ENCODE measurements at regions of chr7 and their contacts with region 1.

Region 1: GRCh38 chr7:48109848-48110663 is 21.0 kb downstream of the UPP1 start:
- DNase-seq: peak; percentile 85
- ATAC-seq: peak; percentile 89

Region 2: GRCh38 chr7:47202146-47202783 is 907.8 kb before region 1 on chr7:
- intact Hi-C with region 1: no loop called
- DNase-seq: no peak
- ATAC-seq: no peak

Region 3: DNA sequence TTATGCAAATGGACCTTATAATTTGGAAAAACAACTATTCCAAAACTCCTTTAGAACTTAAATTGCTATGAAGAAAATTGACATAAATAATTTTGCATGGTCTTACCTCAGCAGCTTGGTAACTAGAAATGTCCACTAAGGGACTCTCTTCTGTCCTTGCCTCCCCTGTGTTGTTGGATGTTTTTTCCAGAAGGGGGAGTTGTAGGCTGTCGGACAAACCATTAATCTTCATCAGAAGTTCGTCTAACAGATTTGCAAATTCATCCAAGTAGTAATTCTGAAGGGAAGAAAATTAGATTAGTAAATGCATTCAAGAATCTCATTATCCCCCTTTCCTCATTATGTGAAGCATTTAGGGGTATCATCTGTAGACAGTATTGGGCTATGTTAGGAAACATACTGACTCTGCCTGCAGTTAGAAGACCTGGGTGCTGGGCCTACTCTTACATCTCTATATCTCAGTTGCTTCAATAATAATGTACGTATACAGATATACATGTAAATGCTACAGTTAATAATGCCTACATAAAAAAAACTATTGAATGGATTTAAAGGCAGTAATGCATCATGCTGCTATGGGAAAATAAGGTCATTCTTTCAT is 317.4 kb before region 1 on chr7:
- intact Hi-C with region 1: loop called (anchors 10 kb)
- DNase-seq: no peak
- ATAC-seq: peak; percentile 66

Region 4: GRCh38 chr7:47945261-47946001 is 164.6 kb before region 1 on chr7:
- intact Hi-C with region 1: loop called (anchors 5 kb)
- DNase-seq: peak; percentile 91
- ATAC-seq: peak; percentile 40

Region 5: GRCh38 chr7:47979145-47979831 is 130.8 kb before region 1 on chr7 and contains the start of gene HUS1:
- intact Hi-C with region 1: no loop called
- DNase-seq: peak; percentile 96
- ATAC-seq: peak; percentile 99
- total RNA-seq, gene HUS1: 23.8 TPM

Region 6: GRCh38 chr7:47991741-47992311 is 118.2 kb before region 1 on chr7:
- intact Hi-C with region 1: loop called (anchors 5 kb)
- DNase-seq: peak; percentile 94
- ATAC-seq: peak; percentile 100

Region 7: GRCh38 chr7:48035301-48035966 is 74.6 kb before region 1 on chr7 and contains the start of gene C7orf57:
- intact Hi-C with region 1: loop called (anchors 2 kb)
- DNase-seq: peak; percentile 96
- ATAC-seq: peak; percentile 100
- total RNA-seq, gene C7orf57: not detected

Region 8: DNA sequence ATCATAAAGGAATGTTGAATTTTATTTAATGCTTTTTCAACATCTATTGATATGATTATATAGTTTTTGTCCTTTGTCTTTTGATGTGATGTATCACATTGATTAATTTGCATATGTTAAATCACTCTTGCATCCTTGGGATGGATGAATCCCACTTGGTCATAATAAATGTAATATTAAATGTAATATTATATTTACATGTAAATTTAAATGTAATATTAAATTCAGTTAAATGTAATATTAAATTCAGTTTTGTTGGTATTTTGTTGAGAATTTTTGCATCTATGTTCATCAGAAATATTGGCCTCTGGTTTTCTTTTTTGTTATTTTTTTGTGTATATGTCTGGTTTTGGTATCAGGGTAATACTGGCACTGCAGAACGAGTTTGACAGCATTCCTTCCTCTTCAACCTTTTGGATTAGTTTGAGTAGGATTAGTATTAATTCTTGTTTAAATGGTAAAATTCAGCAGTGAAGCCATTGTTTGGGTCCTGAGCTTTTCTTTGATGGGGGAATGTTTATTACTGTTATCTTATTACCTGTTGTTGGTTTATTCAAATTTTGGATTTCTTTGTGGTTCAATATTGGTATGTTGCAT is 99.0 kb after region 1 on chr7:
- intact Hi-C with region 1: no loop called
- DNase-seq: no peak
- ATAC-seq: no peak

Measured in Right ventricle myocardium superior (tissue), 1 donor.